Right cardiac atrium (tissue), 5 donors: ENCODE measurements at regions of chr1 and their contacts with region 1.

Region 1: GRCh38 chr1:215526553-215527151 is 40.5 kb upstream of the KCTD3 start:
- DNase-seq: no peak
- ATAC-seq: peak in 1 of 2 donors; percentile 39
- H3K4me3 ChIP-seq: no peak overlapping the region
- H3K27ac ChIP-seq: no peak overlapping the region
- H3K4me1 ChIP-seq: no peaks in the 10 kb centered on the region
- H3K27me3 ChIP-seq: no peaks in the 10 kb centered on the region

Region 2: DNA sequence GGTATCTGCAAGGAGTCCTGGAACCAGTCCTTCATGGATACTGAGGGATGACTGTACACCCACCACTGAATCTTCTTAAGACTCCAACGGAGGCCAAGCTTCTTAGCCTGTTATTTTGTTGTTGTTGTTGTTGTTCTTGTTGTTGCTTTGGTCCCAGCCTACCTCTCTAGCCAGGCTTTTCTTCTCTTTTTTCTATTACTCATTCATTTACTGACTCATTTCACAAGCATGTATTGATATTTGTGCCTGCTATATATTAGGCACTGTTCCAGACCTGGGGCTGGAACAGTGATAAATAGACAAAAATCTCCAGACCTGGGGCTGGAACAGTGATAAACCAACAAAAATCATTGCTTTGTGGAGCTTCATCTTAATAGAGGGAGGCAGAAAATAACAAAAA is 903.2 kb before region 1 on chr1:
- intact Hi-C with region 1: loop called in 1 of 4 experiments (anchors 10 kb)
- DNase-seq: no peak
- ATAC-seq: no peak
- H3K4me3 ChIP-seq: no peak overlapping the region
- H3K27ac ChIP-seq: no peak overlapping the region
- H3K4me1 ChIP-seq: no peaks in the 10 kb centered on the region
- H3K27me3 ChIP-seq: no peaks in the 10 kb centered on the region

Region 3: DNA sequence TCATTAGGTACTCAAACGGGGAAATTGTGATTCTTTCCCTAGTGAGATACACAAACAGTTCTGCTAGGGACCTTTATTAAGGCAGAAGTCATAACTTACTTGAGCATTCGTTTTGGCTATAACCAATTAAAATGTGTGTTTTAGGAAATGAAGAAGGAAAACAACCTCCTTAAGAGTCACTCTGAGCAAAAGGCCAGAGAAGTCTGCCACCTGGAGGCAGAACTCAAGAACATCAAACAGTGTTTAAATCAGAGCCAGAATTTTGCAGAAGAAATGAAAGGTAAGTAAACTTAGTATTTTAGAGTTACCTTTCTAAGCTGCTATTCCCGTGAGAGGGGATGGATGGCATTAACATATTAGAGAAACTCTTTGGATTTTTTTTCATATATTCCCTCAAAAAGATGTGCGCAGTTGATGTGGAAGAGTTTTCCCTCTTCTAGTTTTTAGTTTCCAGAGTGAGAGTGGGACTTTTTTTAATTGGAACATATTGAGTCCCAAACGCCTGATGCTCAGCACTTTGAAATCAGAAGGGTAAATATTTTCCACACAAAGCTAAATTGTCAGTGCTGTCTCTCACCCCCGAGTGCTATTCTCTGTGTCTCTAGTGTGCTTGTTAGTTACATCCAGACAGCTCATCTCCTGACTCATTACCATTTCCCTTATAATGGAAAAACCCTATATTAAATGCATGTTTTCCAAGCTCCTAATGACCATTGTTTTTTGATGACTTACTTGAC is 888.8 kb before region 1 on chr1:
- intact Hi-C with region 1: loop called in 1 of 4 experiments (anchors 10 kb)
- DNase-seq: no peak
- ATAC-seq: peak in 1 of 2 donors; percentile 21
- H3K4me3 ChIP-seq: no peak overlapping the region
- H3K27ac ChIP-seq: no peak overlapping the region
- H3K4me1 ChIP-seq: no peaks in the 10 kb centered on the region
- H3K27me3 ChIP-seq: no peaks in the 10 kb centered on the region

Region 4: GRCh38 chr1:214660862-214661261 is 865.8 kb before region 1 on chr1:
- intact Hi-C with region 1: loop called in 2 of 4 experiments (anchors 5 to 10 kb)
- DNase-seq: peak in 2 of 3 donors; percentile 23 to 52
- ATAC-seq: peak in 1 of 2 donors; percentile 42
- H3K4me3 ChIP-seq: no peak overlapping the region
- H3K27ac ChIP-seq: no peak overlapping the region
- H3K4me1 ChIP-seq: no peaks in the 10 kb centered on the region
- H3K27me3 ChIP-seq: no peaks in the 10 kb centered on the region

Region 5: GRCh38 chr1:215617979-215618378 is 91.3 kb after region 1 on chr1:
- intact Hi-C with region 1: no loop called
- DNase-seq: no peak
- ATAC-seq: no peak
- H3K4me3 ChIP-seq: no peak overlapping the region
- H3K27ac ChIP-seq: no peak overlapping the region
- H3K4me1 ChIP-seq: peaks cover 2% of the 10 kb centered on the region
- H3K27me3 ChIP-seq: no peaks in the 10 kb centered on the region